Activated CD8-positive, alpha-beta T cell treated with anti-CD3 and anti-CD28 coated beads for 36 hours (primary cell): ENCODE measurements at regions of chr22 and their contacts with region 1.

Region 1: DNA sequence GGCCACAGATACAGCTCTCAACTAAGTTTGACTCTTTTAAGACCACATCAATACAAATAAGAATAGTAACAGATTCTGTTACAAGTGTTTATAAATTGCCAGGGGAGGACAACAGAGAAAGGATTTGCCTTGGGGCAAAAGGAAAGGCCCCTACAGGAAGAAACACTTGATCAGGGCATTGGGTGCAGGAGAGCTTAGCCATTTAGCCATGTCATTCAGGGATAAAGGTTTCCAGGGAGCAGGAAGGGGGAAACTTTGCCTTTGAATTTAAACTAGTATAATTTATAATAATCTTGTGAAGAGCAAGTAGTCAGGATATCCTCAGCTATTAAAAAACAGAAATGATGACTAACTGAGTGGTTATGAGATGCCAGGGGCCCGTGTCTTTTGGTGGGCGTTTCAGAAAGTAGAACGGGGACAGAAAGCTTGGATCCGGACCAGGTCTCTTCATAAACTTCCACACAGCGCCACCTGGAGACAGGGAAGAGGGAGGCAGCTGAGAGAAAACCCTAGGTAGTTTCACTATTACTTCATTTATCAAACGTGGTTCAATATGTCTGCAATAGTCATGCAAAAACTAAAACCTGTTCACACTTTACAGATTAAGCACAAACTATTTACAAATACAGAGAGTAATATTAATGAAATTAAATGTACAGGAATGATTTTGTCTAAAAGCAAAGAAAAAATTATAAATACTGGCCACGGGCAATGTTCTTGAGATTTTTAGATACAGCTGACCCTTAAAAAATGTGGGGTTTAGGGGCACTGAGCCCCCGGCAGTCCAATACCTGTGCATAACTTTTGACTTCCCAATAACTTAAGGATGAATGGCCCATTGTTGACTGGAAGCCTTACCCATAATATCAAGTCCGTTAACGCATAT is 11.0 kb upstream of the SLC5A4 start:
- DNase-seq: peak; percentile 89
- ATAC-seq: peak; percentile 95
- H3K4me3 Mint-ChIP-seq: no peak overlapping the region
- H3K27ac Mint-ChIP-seq: no peak overlapping the region
- H3K4me1 Mint-ChIP-seq: peaks cover 10% of the 10 kb centered on the region
- H3K27me3 Mint-ChIP-seq: peaks cover 3% of the 10 kb centered on the region
- CTCF ChIP-seq: peak; percentile 74

Region 2: DNA sequence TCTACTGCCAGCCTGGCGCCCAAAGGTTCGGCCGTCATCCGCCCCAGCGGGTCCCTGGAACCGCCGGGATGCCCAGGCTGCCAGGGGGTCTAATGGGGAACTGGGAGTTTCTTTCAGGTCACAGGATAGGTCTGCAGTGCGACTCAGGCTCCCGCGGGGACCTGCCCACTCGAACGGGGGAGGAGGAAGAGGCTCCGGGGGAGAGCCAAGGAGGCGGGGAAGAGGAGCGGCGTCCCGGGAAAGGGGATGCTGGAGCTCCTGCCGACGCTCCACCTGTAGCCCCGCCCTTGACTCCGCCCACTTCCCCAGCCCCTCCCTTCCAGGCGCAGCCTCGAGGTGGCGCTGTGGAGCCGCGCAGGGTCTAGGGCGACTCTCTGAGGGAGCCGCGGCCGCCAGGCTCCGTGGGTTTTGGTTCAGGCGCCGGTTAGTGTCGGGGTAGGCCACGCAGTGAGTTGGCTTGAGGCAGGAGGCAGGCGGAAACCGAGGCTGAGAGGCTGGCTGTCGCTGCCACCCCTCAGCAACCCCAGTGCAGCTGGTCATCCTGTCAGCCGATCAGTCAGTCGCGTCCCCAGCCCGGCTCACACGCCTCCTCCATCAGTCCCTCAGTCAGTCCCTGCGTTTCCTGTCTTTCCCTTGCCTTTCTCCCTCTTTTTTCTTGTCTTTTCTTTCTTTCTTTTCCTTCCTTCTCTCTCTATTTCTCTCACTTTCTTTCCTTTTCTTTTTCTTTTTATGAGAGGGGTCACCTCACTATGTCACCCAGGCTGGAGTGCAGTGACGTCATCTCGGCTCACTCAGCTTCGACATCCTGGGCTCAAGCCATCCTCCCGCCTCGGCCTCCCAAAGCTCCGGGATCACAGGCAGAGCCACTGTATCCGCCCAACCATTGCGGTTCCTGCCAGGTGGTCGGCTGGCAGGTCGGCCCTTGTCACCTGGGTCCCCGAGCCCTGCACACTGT is 295.4 kb before region 1 on chr22:
- CTCF ChIA-PET with region 1: interaction called, 21 read pairs
- POLR2A ChIA-PET with region 1: no interaction called
- intact Hi-C with region 1: loop called (anchors 5 kb)
- DNase-seq: peak; percentile 86
- ATAC-seq: peak; percentile 99
- H3K4me3 Mint-ChIP-seq: peak overlapping the region; percentile 66
- H3K27ac Mint-ChIP-seq: no peak overlapping the region
- H3K4me1 Mint-ChIP-seq: peaks cover 12% of the 10 kb centered on the region
- H3K27me3 Mint-ChIP-seq: no peaks in the 10 kb centered on the region
- CTCF ChIP-seq: peak; percentile 92

Region 3: GRCh38 chr22:31977141-31977841 is 288.8 kb before region 1 on chr22:
- CTCF ChIA-PET with region 1: interaction called, 21 read pairs
- POLR2A ChIA-PET with region 1: no interaction called
- intact Hi-C with region 1: loop called (anchors 5 kb)
- DNase-seq: peak; percentile 92
- ATAC-seq: peak; percentile 96
- H3K4me3 Mint-ChIP-seq: no peak overlapping the region
- H3K27ac Mint-ChIP-seq: no peak overlapping the region
- H3K4me1 Mint-ChIP-seq: peaks cover 2% of the 10 kb centered on the region
- H3K27me3 Mint-ChIP-seq: peaks cover 1% of the 10 kb centered on the region
- CTCF ChIP-seq: peak; percentile 65

Region 4: DNA sequence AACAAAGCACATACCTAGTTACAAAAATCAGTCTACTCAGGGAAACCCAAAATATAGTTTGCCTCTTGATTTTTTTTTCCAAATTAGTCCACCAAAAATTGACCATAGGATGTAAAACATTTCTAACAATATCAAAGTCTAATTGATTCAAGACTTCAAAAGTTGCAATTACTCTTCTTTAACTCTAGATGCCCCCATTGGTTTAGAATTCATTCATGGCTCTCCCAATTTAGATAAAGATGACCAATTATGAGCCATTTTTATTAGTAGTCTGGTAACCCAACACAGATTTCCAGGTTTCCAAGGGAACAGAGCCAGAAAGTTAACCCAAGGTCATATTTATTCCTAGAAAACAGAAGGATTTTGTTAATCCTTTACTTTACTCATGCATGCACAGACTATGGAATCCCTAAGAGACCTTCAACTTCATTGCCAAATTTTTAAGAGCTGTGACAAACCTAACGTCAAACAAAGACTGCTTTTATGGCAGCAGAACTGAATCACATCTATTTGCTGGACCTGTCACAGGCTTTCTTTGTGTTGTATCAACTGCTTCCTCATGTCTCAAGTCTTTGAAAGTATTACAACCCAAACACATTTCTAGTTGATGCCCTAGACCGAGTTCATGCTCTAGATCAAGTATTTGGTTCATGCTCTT is 162.3 kb before region 1 on chr22:
- CTCF ChIA-PET with region 1: interaction called, 18 read pairs
- POLR2A ChIA-PET with region 1: no interaction called
- intact Hi-C with region 1: loop called (anchors 10 kb)
- DNase-seq: no peak
- ATAC-seq: no peak
- H3K4me3 Mint-ChIP-seq: no peak overlapping the region
- H3K27ac Mint-ChIP-seq: no peak overlapping the region
- H3K4me1 Mint-ChIP-seq: no peaks in the 10 kb centered on the region
- H3K27me3 Mint-ChIP-seq: peaks cover 12% of the 10 kb centered on the region
- CTCF ChIP-seq: peak; percentile 55

Region 5: GRCh38 chr22:32202539-32203180 is 63.5 kb before region 1 on chr22:
- CTCF ChIA-PET with region 1: interaction called, 16 read pairs
- POLR2A ChIA-PET with region 1: no interaction called
- intact Hi-C with region 1: no loop called
- DNase-seq: peak; percentile 39
- ATAC-seq: peak; percentile 47
- H3K4me3 Mint-ChIP-seq: peak overlapping the region; percentile 21
- H3K27ac Mint-ChIP-seq: no peak overlapping the region
- H3K4me1 Mint-ChIP-seq: peaks cover 15% of the 10 kb centered on the region
- H3K27me3 Mint-ChIP-seq: peaks cover 19% of the 10 kb centered on the region
- CTCF ChIP-seq: peak; percentile 41

Region 6: GRCh38 chr22:32281072-32281471 is 14.9 kb after region 1 on chr22:
- CTCF ChIA-PET with region 1: interaction called, 21 read pairs
- POLR2A ChIA-PET with region 1: no interaction called
- intact Hi-C with region 1: no loop called
- DNase-seq: no peak
- ATAC-seq: no peak
- H3K4me3 Mint-ChIP-seq: no peak overlapping the region
- H3K27ac Mint-ChIP-seq: no peak overlapping the region
- H3K4me1 Mint-ChIP-seq: no peaks in the 10 kb centered on the region
- H3K27me3 Mint-ChIP-seq: peaks cover 13% of the 10 kb centered on the region
- CTCF ChIP-seq: no peak